Right ventricle myocardium inferior (tissue), 1 donor: ENCODE measurements at regions of chr2 and their contacts with region 1.

Region 1: DNA sequence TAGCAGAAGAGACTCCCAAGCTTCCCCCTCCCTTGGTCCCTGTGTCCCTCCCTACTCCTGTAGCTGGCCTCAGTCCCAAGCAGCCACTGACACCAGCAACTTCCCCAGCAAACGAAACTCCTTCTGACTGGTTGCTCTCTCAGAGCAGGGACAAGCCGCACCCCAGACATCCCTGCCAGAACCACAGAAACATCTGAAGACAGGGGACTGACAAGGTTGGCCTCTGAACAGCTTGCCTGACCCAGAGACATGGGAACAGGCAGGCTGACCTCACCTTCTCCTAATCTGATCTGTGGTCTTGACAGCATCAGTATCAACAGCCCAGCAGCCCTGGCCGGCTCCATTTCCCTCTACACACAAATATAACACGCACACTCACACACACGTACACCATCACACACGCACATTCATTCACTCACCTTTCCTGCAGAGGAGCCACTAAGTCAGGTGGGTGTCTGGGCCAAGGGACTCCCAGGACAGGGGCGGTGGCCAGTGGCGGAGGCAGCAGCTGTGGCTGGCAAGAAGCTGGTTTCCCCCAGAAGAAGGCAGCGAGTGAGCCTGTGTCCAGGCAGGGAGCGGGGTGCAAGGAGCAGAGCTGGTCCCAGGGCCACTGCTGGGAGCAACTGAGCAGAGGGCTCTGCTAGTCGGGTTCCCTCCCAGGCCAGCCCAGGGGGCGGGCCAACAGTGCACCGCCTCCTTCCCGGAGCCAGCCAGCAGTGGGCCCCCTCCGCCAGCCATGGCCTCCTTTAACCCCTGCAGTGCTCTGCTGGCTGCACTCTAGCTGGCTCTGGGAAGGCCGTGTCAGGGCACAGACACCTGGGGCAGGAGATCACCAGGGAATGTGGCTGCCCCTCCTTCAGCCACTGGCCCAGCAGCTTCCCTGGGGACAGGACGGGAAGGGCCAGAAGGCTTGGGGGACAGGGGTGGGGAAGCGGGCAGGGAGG is 59.1 kb downstream of the TNS1 start:
- DNase-seq: peak; percentile 92
- ATAC-seq: peak; percentile 91

Region 2: DNA sequence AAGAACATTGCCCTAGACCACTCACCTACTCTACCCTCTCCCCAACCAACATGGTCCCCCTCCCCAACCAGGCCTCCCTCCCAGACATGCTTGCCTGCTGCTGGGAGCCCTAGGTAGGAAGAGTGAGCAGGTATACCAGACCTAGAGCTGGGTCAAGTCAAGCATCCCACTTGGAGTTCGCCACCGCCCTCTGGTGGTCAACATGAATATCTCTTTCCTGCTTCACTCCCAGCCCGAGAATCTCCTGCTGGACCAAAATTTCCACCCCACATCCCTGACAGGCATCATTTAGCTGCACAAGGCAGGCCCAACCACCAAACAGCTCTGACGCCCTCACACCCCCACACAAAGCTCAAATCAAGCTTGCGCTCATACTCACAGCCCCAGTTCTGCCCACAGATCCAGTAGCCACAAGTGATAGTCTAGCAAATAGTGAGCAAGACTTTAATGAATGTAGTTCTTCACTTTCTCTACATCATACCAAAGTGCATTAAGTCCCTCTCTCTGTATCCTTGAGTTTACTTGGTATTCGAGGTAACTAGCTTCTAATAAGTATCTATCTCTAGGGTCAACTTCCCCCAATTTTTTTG is 56.9 kb before region 1 on chr2:
- intact Hi-C with region 1: loop called (anchors 5 kb)
- DNase-seq: peak; percentile 78
- ATAC-seq: peak; percentile 35

Region 3: DNA sequence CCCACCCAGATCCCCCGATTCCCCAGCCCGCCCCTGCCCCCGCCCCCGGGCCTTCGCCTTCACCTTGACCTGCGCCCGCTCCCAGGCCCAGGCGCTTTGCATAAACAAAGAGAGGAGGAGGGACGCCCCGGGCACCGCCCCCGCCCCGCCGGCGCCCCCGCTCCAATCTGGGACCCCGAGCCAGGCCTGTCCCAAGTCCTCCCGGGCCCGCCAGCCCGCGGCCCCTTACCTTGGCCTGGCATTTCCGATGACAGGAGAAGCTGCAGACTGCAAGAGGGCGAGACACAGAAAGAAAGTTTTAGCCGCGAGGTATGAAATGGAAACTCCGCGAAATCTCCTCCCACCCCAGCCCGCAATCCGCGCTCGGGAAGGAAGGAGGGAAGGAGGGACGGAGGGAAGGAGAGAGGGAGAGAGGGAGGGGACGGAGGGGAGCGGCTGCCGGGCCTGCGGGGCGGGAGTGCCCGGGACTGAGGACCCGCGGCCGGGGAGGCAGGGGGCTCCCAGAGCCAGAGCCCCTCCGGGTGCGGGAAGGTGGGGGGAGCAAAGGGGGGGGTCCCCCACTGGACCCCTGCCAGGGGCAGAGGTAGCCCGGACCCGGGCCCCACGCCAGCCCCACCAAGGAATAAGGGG is 34.9 kb after region 1 on chr2:
- intact Hi-C with region 1: loop called (anchors 2 kb)
- DNase-seq: peak; percentile 64
- ATAC-seq: peak; percentile 46